Heart left ventricle (tissue), 16 donors: ENCODE measurements at regions of chr1 and their contacts with region 1.

Region 1: DNA sequence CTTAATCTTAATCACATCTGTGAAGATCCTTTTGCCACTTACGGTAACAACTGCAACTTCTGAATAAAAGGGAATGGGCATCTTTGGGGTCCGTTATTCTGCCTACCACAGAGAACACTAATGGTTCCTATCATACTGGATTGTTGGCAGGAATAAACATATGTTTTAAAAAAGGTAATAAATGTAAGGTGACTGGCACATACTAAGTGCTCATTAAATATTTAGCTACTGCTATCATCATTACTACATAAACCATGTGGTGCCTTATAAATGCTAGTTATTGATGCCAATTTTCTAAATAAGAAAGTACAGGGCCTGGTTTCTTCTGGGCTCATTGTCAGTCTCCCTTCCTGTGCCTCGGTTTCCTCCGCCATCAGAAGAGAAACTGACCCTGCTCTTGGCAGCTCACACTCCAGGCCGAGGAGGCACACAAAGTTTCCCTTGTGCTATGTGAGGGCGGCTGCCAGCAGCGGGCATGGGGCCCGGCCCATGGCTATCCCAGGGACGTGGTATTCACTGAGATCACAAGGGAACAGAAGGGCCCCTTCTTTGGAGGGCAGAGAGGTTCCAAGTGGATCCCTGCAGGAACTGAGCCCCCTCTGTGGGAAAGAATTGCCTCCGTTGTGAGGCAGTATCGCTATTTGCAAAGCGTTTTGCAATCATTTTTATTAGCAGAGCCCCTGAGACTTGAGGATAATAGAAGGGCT is 26.2 kb downstream of the NAV1 start:
- DNase-seq: no peak
- ATAC-seq: peak in 2 of 4 donors; percentile 29 to 30
- H3K4me3 ChIP-seq: no peak overlapping the region
- H3K27ac ChIP-seq: peak overlapping the region in 10 of 12 donors; percentile 6 to 60 (median 42)
- H3K4me1 ChIP-seq: peaks cover 22 to 94% (median 69%) of the 10 kb centered on the region in 12 donors
- H3K27me3 ChIP-seq: no peaks in the 10 kb centered on the region
- CTCF ChIP-seq: no peak
- POLR2A ChIP-seq: no peak

Region 2: DNA sequence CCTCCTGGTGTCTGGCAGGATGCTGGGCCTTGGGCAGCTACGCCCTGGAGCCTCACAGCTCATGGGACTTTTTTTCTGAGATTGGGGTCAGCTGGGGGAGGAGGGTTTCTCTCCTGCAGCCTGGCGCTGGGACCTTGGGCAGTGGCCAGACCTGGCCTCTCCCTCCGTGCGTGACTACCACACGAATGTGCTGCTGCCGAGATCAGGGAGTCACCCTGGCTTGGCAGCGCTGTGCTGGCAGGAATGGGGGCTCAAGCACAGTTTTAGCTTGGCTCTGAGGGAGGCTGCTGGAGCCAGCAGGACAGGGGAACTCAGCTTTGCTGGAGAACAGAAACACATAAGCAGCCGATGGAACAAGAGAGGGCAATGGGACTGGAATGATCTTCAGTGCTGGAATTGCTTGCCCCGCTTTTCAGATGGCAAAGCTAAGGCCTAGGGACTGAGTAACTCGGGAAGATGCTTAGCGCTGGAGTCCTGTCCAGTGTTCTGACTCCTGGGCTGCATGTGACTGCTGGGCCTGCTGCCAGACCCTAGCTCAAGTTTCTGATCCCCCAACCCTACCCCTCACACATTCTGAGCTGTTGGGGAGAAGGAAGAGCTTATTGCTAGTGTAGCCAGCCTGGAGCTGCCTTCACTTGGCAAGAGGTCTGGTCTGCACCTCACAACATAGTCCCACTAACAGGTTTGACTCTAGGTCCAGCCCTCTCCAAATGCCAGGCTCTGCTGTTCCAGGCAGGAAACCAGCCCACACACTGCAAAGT is 43.6 kb after region 1 on chr1:
- intact Hi-C with region 1: loop called in 2 of 10 experiments (anchors 5 kb)
- DNase-seq: peak in 1 of 5 donors; percentile 53
- ATAC-seq: peak in 3 of 4 donors; percentile 22 to 75 (median 56)
- H3K4me3 ChIP-seq: no peak overlapping the region
- H3K27ac ChIP-seq: no peak overlapping the region
- H3K4me1 ChIP-seq: peaks cover 0 to 56% (median 35%) of the 10 kb centered on the region in 12 donors
- H3K27me3 ChIP-seq: no peaks in the 10 kb centered on the region
- CTCF ChIP-seq: no peak
- POLR2A ChIP-seq: no peak

Region 3: DNA sequence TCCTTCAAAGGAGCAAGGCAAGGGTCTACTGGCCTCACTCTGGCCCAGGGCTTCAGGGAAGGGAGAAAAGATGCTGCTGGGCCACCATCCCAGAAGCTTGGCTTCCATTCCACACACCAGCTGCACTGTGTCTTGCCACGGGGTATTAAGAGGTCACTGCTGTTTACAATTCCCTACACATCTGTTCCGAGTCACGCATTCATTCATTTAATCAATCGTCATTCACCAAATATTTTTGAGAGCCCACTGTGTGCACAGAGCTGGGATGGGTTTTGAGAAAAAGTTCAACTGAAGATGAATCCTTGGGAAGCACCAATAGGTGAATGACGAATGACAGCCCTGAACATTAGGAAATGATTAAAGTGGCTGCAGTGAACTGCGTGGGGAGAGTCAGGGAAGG is 75.4 kb after region 1 on chr1:
- intact Hi-C with region 1: loop called in 4 of 10 experiments (anchors 5 to 10 kb)
- DNase-seq: peak in 4 of 5 donors; percentile 65 to 75 (median 69)
- ATAC-seq: peak; percentile 47 to 76 (median 65)
- H3K4me3 ChIP-seq: no peak overlapping the region
- H3K27ac ChIP-seq: peak overlapping the region in 10 of 12 donors; percentile 12 to 67 (median 62)
- H3K4me1 ChIP-seq: peaks cover 0 to 65% (median 49%) of the 10 kb centered on the region in 12 donors
- H3K27me3 ChIP-seq: no peaks in the 10 kb centered on the region
- CTCF ChIP-seq: no peak
- POLR2A ChIP-seq: no peak

Region 4: DNA sequence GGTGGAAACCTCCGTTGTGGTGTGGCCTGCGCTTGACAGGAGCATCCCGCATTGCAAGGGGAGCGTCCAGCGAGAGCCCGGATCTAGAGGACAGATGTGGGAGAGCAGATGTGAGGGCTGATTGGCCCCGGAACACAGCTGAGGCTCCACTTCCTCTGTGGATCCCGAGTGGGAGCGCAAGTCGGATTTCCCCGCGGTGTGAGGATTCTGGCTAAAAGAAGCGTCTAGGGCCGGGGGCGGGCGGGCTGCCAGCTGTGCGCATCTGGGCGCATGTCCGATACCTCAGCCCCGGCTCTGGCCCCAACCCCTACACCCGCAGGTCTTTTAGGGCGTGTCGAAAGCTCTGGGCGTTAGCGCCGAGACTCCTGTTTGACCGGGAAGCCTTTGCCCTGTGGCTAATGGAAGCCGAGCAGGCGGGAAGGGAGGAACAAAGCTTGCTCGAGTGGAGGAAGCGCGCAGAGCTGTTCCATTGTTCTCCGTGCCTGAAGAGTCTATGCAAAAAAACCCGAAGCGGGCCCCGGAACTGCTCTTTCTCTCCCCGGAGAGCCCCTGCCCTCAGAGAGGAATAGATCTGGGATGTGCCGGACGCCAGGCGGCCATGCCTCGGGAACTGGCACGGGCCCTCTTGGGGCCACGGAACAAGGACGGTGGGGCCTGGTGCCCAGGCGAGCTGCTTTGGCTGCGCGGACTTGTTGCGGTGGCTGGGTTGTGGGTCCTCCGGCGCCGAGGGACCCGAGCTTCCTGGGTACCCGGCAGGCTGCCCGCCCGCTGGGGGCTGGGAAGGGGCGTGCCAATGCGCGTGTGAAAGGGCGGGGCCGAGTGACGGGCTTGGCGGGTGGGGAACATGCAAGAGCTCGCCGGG is 84.8 kb after region 1 on chr1:
- intact Hi-C with region 1: loop called in 2 of 10 experiments (anchors 5 to 10 kb)
- DNase-seq: peak; percentile 82 to 93 (median 87)
- ATAC-seq: peak; percentile 47 to 74 (median 70)
- H3K4me3 ChIP-seq: peak overlapping the region; percentile 36 to 93 (median 68)
- H3K27ac ChIP-seq: peak overlapping the region; percentile 18 to 94 (median 80)
- H3K4me1 ChIP-seq: peaks cover 4 to 86% (median 63%) of the 10 kb centered on the region in 12 donors
- H3K27me3 ChIP-seq: no peaks in the 10 kb centered on the region
- CTCF ChIP-seq: peak in 1 of 12 donors; percentile 17
- POLR2A ChIP-seq: peak in 1 of 2 donors; percentile 18